Activated CD4-positive, alpha-beta memory T cell treated with anti-CD3 and anti-CD28 coated beads for 36 hours (primary cell): ENCODE measurements at regions of chr6 and their contacts with region 1.

Region 1: DNA sequence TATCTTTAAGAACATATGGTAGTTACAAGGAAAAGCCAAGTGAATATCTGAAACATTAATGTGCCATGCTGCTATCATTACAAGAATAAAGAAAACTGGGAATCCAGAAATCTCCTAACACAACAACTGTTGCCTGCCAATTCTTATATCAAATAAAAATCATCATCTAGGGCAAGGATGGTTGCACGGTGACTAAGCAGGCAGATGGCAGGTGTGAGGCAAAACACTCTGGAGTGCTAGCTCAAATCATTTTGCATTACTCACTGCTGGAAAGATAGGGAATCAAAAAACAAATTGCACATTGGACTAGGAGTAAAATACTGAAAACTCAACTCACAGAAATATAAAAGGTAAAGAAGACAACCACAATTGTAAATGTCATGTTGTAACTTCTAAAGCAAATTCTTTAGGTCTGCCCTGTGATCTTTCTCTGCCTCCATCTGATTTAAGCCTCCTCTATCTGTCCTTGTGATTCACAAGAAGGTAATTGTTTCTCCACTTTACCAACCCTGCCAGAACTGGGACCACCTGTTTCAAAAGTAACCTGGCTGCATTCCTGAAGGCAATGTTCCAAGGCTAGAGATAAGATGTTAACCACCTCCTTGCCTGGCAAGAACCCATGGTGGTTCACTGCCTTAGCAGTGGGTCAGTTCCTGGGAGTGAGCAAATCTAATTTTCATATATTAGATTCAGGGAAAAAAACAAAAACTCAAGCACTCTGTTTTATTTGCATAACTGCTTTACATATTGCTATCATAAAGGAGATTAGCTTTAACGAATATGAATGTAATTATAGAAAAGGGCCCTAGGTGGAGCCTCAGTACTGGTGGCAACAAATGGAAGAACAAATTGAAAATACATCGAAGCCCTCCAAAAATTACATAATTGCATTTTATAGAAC is 33.1 kb upstream of the LCA5 start:
- DNase-seq: no peak
- H3K4me3 Mint-ChIP-seq: no peak overlapping the region
- H3K27ac Mint-ChIP-seq: no peak overlapping the region
- H3K4me1 Mint-ChIP-seq: no peaks in the 10 kb centered on the region
- H3K27me3 Mint-ChIP-seq: peaks cover 1% of the 10 kb centered on the region

Region 2: DNA sequence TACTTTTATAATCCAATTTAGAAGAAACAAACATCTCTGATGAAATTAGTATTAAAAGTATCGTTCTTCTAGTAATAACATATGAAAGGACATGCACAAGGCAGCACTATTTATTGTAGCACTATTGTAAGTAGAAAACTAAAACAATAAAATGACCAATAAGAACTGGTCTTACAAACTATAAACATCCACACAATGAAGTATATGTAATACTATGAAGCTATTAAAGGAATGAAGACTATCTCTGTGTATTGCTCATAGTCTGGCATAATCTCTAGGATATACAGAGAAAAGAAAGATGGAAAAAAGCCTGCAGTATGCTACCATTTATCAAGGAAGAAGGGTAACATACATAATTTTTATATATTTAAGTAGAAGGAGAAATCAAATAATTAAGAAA is 49.8 kb before region 1 on chr6:
- CTCF ChIA-PET with region 1: no interaction called
- POLR2A ChIA-PET with region 1: no interaction called
- intact Hi-C with region 1: no loop called
- DNase-seq: no peak
- H3K4me3 Mint-ChIP-seq: no peak overlapping the region
- H3K27ac Mint-ChIP-seq: no peak overlapping the region
- H3K4me1 Mint-ChIP-seq: no peaks in the 10 kb centered on the region
- H3K27me3 Mint-ChIP-seq: no peaks in the 10 kb centered on the region

Region 3: GRCh38 chr6:79672631-79673111 is 102.3 kb after region 1 on chr6:
- CTCF ChIA-PET with region 1: interaction called, 10 read pairs
- POLR2A ChIA-PET with region 1: no interaction called
- intact Hi-C with region 1: loop called (anchors 1 kb)
- DNase-seq: no peak
- H3K4me3 Mint-ChIP-seq: no peak overlapping the region
- H3K27ac Mint-ChIP-seq: no peak overlapping the region
- H3K4me1 Mint-ChIP-seq: peaks cover 23% of the 10 kb centered on the region
- H3K27me3 Mint-ChIP-seq: no peaks in the 10 kb centered on the region

Region 4: GRCh38 chr6:79713701-79714322 is 143.4 kb after region 1 on chr6:
- CTCF ChIA-PET with region 1: interaction called, 8 read pairs
- POLR2A ChIA-PET with region 1: no interaction called
- intact Hi-C with region 1: loop called (anchors 1 kb)
- DNase-seq: peak; percentile 43
- H3K4me3 Mint-ChIP-seq: no peak overlapping the region
- H3K27ac Mint-ChIP-seq: no peak overlapping the region
- H3K4me1 Mint-ChIP-seq: no peaks in the 10 kb centered on the region
- H3K27me3 Mint-ChIP-seq: peaks cover 3% of the 10 kb centered on the region

Region 5: GRCh38 chr6:79813854-79814709 is 243.7 kb after region 1 on chr6:
- CTCF ChIA-PET with region 1: interaction called, 6 read pairs
- POLR2A ChIA-PET with region 1: no interaction called
- intact Hi-C with region 1: loop called (anchors 1 kb)
- DNase-seq: peak; percentile 75
- H3K4me3 Mint-ChIP-seq: no peak overlapping the region
- H3K27ac Mint-ChIP-seq: no peak overlapping the region
- H3K4me1 Mint-ChIP-seq: no peaks in the 10 kb centered on the region
- H3K27me3 Mint-ChIP-seq: no peaks in the 10 kb centered on the region